Ascending aorta (tissue), 2 donors: ENCODE measurements at regions of chr10 and their contacts with region 1.

Region 1: GRCh38 chr10:71285180-71285545 is 33.9 kb upstream of the SLC29A3 start:
- DNase-seq: no peak
- H3K4me3 ChIP-seq: no peak overlapping the region
- H3K27ac ChIP-seq: no peak overlapping the region
- H3K4me1 ChIP-seq: no peaks in the 10 kb centered on the region
- H3K27me3 ChIP-seq: no peaks in the 10 kb centered on the region
- CTCF ChIP-seq: peak; percentile 63 to 79 (median 76)

Region 2: DNA sequence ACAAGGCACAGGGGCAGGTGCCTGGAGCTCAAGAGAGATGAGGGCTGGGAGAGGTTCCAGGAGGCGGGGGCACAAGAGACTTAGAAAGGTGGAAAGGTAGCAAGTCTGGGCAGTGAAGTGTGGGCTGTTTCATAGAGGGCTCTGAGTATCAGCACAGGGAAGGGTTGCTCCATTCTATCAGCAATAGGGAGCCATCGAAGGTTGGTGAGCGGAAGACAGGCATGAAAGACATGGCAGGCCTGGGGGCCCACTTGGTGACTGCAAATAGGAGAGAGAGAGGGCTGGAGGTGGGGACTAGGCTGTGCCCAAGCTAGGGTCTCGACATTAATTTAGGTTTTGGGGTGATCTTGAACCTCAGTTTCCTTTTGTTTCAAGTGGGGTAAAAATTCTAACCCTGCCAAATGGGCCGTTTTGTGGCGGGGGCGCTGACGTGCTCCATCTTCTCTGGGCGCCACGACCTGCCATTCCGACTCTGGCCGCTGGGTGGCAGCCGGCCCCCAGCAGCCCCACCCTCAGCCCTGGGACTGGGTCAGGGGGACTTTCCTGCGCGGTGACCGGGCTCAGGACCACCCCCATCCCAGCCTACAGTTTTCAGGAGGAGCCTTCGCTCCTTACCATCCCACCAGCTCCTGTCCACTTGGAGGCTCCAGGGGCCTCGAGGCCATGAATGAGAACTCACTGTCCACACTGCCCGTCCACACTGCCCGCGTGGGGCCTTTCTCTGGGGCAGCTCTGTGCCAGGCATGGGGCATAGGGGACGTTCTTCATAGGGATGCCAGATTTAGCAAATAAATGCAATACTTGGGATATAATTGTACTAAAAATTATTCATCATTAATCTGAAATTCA is 359.6 kb before region 1 on chr10:
- intact Hi-C with region 1: loop called (anchors 1 kb)
- DNase-seq: peak in 1 of 2 donors; percentile 73
- H3K4me3 ChIP-seq: no peak overlapping the region
- H3K27ac ChIP-seq: no peak overlapping the region
- H3K4me1 ChIP-seq: peaks cover 0 to 4% of the 10 kb centered on the region in 2 donors
- H3K27me3 ChIP-seq: no peaks in the 10 kb centered on the region
- CTCF ChIP-seq: peak; percentile 90 to 98 (median 98)